ENCODE measurements at regions of chr2 and their contacts with region 1.

Region 1: DNA sequence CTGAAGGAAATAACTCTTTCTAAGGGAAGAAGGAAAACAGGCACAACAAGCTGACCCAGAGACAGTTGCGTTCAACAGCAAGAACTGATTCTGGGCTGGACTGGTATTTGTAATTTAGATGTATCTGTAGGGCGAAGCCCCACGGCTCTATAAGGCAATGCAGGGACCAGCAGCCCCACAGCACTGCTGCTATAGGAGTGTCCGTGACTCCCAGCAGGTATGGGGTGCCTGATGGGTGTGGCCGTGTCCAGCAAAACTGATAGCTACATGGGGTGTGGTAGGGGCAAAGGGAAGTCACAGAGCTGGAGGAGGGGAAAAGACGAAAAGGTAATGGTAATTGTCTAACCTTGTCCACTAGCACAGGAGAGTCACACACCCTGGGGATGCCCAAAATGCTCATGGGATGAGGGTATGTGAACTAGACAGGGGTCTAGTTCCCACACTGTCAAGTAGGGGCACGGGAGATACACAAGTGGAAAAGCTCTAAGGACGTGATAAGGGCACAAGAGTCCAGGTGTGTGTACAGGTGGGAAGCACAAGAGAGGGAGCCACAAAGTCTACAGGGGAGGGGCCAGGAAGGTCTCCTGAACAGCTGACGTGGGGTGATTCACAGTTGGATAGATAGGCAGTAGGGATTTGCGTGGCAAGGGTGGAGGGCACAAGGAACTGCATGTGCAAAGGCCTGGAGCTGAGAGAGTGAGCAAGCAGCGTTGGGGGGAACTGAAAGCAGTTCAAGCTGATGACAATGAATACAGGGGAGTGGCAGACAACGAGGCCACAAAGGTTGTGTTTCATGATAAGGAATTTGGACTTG is 48.5 kb upstream of the ASPRV1 start:
- DNase-seq: no peak
- H3K4me3 ChIP-seq: no peak overlapping the region
- CTCF ChIP-seq: no peak

Region 2: GRCh38 chr2:69767034-69767433 is 242.9 kb before region 1 on chr2:
- in situ Hi-C with region 1: no loop called
- DNase-seq: no peak
- H3K4me3 ChIP-seq: no peak overlapping the region
- CTCF ChIP-seq: peak; percentile 23

Region 3: GRCh38 chr2:69946351-69947077 is 63.5 kb before region 1 on chr2:
- in situ Hi-C with region 1: loop called (anchors 5 kb)
- DNase-seq: peak; percentile 31
- H3K4me3 ChIP-seq: no peak overlapping the region
- CTCF ChIP-seq: no peak

Region 4: GRCh38 chr2:69957965-69958364 is 52.0 kb before region 1 on chr2:
- in situ Hi-C with region 1: no loop called
- DNase-seq: no peak
- H3K4me3 ChIP-seq: no peak overlapping the region
- CTCF ChIP-seq: no peak

Region 5: DNA sequence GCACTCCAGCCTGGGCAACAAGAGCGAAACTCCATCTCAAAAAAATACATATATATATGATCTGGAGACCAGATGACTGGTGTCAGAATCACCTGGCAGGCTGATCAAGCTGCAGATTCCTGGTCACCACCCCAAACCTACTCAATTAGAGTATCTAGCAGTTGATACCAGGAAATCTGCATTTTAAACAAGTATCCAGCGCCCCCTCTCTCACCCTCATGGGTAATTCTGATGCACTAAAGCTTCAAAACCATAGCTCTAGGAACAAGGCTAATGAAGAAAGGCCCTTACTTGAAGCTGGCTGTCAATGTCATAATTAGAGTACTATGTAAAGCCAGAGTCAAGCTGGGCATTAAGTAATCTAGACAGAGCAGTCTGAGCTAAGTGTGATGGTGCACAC is 52.3 kb after region 1 on chr2:
- in situ Hi-C with region 1: loop called (anchors 5 kb)
- DNase-seq: no peak
- H3K4me3 ChIP-seq: no peak overlapping the region
- CTCF ChIP-seq: no peak